Activated naive CD4-positive, alpha-beta T cell treated with anti-CD3 and anti-CD28 coated beads, Interleukin-2, amount 10 ng/mL, durations not matched to agents 7 days and 5 days (primary cell): ENCODE measurements at regions of chr14 and their contacts with region 1.

Region 1: DNA sequence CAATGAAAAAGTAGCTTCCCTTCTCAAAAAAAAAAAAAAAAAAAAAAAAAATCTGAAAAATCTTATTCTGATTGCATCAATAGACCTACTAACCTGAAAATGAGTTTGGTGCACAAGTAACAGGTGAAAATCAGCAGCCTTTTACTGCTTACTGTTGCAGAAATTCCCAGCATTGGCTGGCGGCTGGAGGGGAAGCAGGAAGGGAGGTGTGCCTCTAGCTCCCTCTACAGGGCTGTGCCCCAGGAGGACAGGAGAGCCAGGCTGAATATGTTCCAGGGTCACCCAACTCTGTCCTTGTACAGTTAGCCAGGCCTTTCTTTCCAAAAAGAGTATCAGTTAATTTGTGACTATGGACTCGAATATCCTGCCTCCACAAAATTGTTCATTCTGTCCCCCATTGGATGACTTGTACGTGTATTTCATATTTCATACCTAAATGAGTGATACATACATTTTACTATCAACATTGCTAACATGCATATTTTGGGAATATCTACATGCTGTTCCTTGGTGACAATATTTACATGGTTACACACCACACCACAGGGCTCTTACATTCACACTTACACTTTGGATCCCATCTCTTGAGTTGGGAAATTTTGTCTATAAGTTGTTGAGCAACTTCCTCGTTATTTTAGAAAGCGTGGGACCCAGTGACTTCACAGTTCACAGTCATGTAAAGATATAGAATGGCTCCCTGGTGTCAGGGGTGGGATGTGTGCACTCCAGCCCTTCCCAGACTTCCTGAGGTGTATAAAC is 124.8 kb downstream of the SAMD4A start:
- DNase-seq: peak; percentile 59
- H3K4me3 Mint-ChIP-seq: no peak overlapping the region
- H3K27ac Mint-ChIP-seq: no peak overlapping the region
- H3K4me1 Mint-ChIP-seq: no peaks in the 10 kb centered on the region
- H3K27me3 Mint-ChIP-seq: peaks cover 32% of the 10 kb centered on the region

Region 2: GRCh38 chr14:54572316-54572715 is 119.4 kb before region 1 on chr14:
- CTCF ChIA-PET with region 1: interaction called, 23 read pairs
- DNase-seq: peak; percentile 46
- H3K4me3 Mint-ChIP-seq: no peak overlapping the region
- H3K27ac Mint-ChIP-seq: no peak overlapping the region
- H3K4me1 Mint-ChIP-seq: peaks cover 6% of the 10 kb centered on the region
- H3K27me3 Mint-ChIP-seq: peaks cover 28% of the 10 kb centered on the region

Region 3: GRCh38 chr14:54669721-54670561 is 21.8 kb before region 1 on chr14:
- CTCF ChIA-PET with region 1: interaction called, 15 read pairs
- DNase-seq: peak; percentile 32
- H3K4me3 Mint-ChIP-seq: no peak overlapping the region
- H3K27ac Mint-ChIP-seq: peak overlapping the region; percentile 51
- H3K4me1 Mint-ChIP-seq: peaks cover 33% of the 10 kb centered on the region
- H3K27me3 Mint-ChIP-seq: peaks cover 22% of the 10 kb centered on the region

Region 4: DNA sequence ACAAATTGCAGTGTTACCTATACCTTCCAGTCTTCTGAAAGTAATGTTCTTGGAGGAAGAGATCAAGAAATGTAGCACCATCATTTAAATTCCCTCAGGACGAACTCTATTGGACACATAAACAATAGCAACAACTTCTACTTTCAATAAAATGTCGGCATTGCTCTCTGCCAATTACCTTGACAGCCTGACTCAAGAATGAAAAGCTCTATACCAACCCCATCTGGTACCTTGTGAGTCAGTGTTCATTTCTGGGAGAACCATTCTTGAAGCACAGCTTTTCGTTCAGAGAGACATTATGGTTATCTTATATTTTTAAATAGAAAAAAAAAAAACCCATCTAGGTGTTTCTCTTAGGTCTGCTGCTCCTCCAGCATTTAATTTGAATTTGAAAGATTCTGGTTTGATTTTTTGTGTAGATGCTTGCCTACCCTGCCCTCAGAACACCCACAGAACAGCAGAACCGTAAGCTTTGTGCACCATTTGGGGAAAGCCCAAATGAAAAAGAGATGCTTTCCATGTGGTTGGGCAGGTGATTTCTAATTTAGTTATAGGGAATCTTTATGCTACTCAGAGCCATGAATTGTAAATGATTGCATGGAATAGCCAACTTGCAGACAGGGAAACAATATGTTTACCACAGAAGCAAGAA is 31.2 kb after region 1 on chr14:
- CTCF ChIA-PET with region 1: interaction called, 28 read pairs
- DNase-seq: peak; percentile 33
- H3K4me3 Mint-ChIP-seq: no peak overlapping the region
- H3K27ac Mint-ChIP-seq: no peak overlapping the region
- H3K4me1 Mint-ChIP-seq: peaks cover 14% of the 10 kb centered on the region
- H3K27me3 Mint-ChIP-seq: peaks cover 28% of the 10 kb centered on the region

Region 5: DNA sequence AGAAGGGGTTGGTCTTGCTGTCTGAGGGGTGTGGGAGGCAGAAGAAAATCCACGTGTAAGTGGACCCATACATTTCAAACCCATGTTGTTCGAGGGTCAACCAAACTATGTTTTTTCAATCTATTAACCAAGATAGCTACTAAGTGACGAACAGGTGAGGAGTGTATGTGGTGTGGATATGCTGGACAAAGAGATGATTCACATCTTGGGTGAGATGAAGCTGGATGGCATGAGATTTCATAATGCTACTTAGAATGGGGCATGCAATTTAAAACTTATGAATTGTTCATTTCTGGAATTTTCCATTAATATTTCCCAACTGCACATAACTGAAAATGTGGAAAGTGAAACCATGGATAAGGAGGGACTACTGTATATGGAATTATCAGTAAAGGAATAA is 870.4 kb after region 1 on chr14:
- CTCF ChIA-PET with region 1: no interaction called
- DNase-seq: no peak
- H3K4me3 Mint-ChIP-seq: no peak overlapping the region
- H3K27ac Mint-ChIP-seq: no peak overlapping the region
- H3K4me1 Mint-ChIP-seq: no peaks in the 10 kb centered on the region
- H3K27me3 Mint-ChIP-seq: peaks cover 5% of the 10 kb centered on the region